AG04450 (cell line): ENCODE measurements at regions of chr2 and their contacts with region 1.

Region 1: GRCh38 chr2:96554293-96555145 is 18.0 kb downstream of the ARID5A start:
- DNase-seq: no peak
- H3K4me3 ChIP-seq: no peak overlapping the region
- H3K27ac ChIP-seq: no peak overlapping the region
- H3K27me3 ChIP-seq: no peaks in the 10 kb centered on the region
- CTCF ChIP-seq: peak; percentile 86

Region 2: GRCh38 chr2:96320728-96321622 is 233.5 kb before region 1 on chr2:
- CTCF ChIA-PET with region 1: no interaction called
- POLR2A ChIA-PET with region 1: no interaction called
- DNase-seq: no peak
- H3K4me3 ChIP-seq: peak overlapping the region; percentile 69
- H3K27ac ChIP-seq: peak overlapping the region; percentile 11
- H3K27me3 ChIP-seq: peaks cover 7% of the 10 kb centered on the region
- CTCF ChIP-seq: no peak

Region 3: DNA sequence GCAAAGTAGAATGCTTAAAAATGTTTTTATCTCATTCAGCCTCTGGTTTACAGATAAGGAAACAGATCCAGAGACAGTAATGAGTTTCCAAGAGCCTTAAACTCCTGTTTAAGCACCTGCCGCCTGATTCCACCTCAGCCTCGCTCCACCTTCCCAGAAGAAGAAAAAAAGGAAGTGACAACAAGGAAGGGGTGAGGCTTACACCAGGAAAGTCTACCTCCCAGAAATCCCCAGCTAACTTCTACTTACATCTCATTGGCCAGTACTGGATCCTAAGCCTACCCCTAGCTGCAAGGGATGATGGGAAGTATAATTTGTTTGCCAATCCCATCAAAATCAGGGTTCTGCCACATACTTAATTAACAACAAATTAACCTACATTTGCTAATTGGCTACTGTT is 33.3 kb before region 1 on chr2:
- CTCF ChIA-PET with region 1: no interaction called
- POLR2A ChIA-PET with region 1: no interaction called
- DNase-seq: no peak
- H3K4me3 ChIP-seq: no peak overlapping the region
- H3K27ac ChIP-seq: no peak overlapping the region
- H3K27me3 ChIP-seq: peaks cover 25% of the 10 kb centered on the region
- CTCF ChIP-seq: no peak

Region 4: DNA sequence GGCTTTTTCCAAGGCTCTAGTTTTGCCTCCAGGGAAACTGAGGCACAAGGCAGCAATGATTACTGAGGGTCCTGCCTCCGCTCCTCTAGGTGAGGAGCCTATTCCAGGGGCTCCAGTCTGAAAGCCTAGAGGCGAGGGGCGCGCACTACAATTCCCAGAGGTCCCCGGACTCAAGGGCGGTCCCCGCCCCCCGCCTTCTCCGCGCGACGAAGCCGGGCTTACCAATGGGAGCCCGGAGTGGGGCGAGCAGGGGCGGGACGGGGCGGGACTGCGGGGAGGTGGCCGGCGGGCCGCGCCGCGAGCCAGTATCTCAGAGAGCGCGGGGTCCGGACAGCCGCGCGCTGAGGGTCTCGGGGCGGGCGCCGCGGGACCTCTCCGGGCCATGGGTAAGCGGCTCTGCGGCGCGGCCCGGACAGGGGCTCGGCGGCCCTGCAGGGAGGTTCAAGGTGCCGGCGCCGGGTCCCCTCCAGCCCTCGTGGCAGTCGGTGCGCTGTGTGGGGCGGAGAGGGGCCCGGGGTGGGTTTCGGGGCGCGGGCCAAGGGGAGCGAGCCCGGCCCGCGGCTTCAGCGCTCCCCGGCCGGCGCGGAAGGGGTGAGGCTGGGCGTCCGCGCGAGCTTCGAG is 18.0 kb before region 1 on chr2 and contains the start of gene ARID5A:
- CTCF ChIA-PET with region 1: interaction called, 46 read pairs
- POLR2A ChIA-PET with region 1: no interaction called
- DNase-seq: peak; percentile 53
- H3K4me3 ChIP-seq: peak within 1 kb of the TSS; percentile 74
- H3K27ac ChIP-seq: peak within 1 kb of the TSS; percentile 39
- H3K27me3 ChIP-seq: no peaks in the 10 kb centered on the region
- CTCF ChIP-seq: peak; percentile 47
- polyA plus RNA-seq, gene ARID5A: 3.1 and 5.0 TPM in 2 replicates

Region 5: GRCh38 chr2:96565111-96565510 is 10.6 kb after region 1 on chr2:
- CTCF ChIA-PET with region 1: interaction called, 12 read pairs
- POLR2A ChIA-PET with region 1: no interaction called
- DNase-seq: no peak
- H3K4me3 ChIP-seq: no peak overlapping the region
- H3K27ac ChIP-seq: no peak overlapping the region
- H3K27me3 ChIP-seq: peaks cover 5% of the 10 kb centered on the region
- CTCF ChIP-seq: no peak

Region 6: GRCh38 chr2:96584017-96584416 is 29.5 kb after region 1 on chr2:
- CTCF ChIA-PET with region 1: interaction called, 11 read pairs
- POLR2A ChIA-PET with region 1: no interaction called
- DNase-seq: no peak
- H3K4me3 ChIP-seq: no peak overlapping the region
- H3K27ac ChIP-seq: no peak overlapping the region
- H3K27me3 ChIP-seq: no peaks in the 10 kb centered on the region
- CTCF ChIP-seq: no peak